ENCODE measurements at regions of chr17 and their contacts with region 1.

Region 1: GRCh38 chr17:45148183-45149036 is at the start of gene HEXIM1:
- DNase-seq: peak; percentile 97
- H3K4me3 ChIP-seq: peak within 1 kb of the TSS; percentile 98
- CTCF ChIP-seq: no peak

Region 2: DNA sequence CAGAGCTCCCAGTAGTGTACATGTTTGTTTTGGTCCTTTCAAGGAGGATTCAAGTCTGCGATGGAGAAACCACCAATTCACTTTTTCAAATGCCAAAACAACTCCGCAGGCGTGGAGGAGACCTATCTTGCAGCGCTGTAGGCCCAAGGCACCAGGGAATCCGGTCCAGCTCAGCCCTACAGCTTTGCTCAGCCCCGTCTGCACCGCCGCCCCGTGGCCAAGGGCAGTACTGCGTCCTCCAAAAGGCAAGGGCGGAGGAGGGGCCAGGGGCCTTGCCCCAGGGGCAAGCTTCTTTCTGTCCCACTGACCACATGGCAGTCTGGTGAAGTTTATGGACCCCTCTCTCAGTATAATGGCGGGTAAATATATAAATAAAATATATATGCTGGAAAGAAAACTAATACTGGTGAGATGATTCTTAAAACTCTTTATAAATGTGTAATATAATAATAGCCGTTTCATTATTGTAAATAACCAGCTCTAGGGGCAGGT is 1302.1 kb before region 1 on chr17:
- CTCF ChIA-PET with region 1: no interaction called
- POLR2A ChIA-PET with region 1: no interaction called
- DNase-seq: peak; percentile 3
- H3K4me3 ChIP-seq: no peak overlapping the region
- CTCF ChIP-seq: peak; percentile 100

Region 3: GRCh38 chr17:45123930-45124796 is 24.2 kb before region 1 on chr17:
- CTCF ChIA-PET with region 1: interaction called, 7 read pairs
- POLR2A ChIA-PET with region 1: interaction called, 11 read pairs
- DNase-seq: no peak
- H3K4me3 ChIP-seq: no peak overlapping the region
- CTCF ChIP-seq: no peak

Region 4: GRCh38 chr17:45161019-45161825 is 12.8 kb after region 1 on chr17:
- CTCF ChIA-PET with region 1: interaction called, 116 read pairs
- POLR2A ChIA-PET with region 1: interaction called, 308 read pairs
- DNase-seq: peak; percentile 100
- H3K4me3 ChIP-seq: peak overlapping the region; percentile 92
- CTCF ChIP-seq: no peak

Region 5: DNA sequence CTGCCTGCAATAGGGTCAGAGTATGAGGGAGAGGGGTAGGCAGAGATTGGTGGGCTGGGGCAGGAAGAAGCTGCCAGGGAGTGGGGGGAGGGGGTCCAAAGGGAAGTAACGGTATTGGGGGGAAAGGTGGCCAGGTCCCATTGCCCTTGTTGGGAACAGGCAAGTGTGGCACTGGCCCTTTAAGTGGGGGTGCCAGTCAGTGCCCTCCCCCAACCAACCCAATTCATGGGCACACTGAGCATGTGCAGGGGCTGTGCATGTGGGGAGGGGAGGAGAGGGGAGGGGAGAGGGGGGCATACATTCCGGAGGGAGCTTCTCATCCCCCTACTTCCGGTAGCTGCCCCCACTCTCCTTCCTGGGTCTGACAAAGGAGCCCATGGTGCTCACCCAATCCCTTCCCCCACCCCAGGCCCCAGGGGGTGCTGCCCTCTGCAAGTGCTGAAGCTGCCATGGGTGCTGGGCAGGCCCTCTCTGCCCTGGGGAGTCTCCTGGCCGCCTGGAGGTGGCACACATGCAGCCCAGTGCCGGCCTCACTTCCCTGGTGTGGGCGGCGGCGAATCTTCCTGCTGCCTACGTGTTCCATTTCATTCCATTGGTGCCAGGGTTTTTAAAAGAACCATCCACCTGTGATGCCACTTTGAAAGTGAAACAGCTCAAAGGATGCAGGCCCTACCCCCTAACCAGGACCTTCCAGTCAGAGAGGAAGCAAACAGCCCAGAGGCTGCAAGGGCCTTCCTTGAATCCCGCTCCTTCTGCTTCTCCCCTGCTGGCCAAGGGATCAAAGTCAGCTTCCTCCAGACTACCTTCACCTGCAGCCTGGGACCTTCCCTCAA is 24.3 kb after region 1 on chr17:
- CTCF ChIA-PET with region 1: interaction called, 21 read pairs
- POLR2A ChIA-PET with region 1: interaction called, 66 read pairs
- DNase-seq: no peak
- H3K4me3 ChIP-seq: peak overlapping the region; percentile 30
- CTCF ChIP-seq: no peak

Region 6: DNA sequence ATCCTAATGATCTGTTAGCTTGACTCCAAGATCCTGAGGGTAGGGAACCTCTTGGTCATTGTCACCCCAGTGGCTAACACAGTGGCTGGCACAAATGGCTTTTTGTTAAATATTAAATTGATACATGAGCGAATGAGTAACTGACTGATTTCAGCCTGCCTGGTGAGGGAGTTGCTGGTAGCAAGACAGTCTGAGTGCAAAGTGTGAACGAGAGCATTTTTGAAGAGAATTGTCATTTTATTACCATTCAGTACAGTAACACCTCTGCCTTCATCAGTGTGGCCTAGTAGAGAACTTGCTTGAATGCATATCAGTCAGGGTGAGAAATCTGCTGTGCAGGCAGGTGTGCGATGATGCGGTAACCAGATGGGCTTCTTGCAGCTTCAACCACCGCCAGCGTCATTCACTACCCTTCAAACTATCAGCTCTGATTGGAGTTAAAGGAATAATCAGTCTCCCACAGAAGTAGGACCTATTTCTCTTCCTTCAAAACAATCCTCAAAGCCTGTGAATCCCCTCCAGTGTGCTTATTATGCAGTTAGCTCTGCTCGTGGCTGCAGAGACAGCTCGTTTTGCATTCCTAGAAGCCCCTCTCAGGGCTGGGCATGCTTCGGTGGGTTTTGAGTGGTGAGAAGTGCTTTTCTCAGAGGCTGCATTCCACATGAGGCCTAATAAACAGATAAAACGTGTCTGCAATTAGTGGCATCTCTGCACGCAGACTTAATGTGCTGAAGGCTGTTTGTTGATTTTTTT is 42.3 kb after region 1 on chr17:
- CTCF ChIA-PET with region 1: interaction called, 399 read pairs
- POLR2A ChIA-PET with region 1: interaction called, 11 read pairs
- DNase-seq: no peak
- H3K4me3 ChIP-seq: no peak overlapping the region
- CTCF ChIP-seq: no peak

Region 7: GRCh38 chr17:45197555-45198334 is 49.3 kb after region 1 on chr17:
- CTCF ChIA-PET with region 1: interaction called, 399 read pairs
- POLR2A ChIA-PET with region 1: interaction called, 97 read pairs
- DNase-seq: peak; percentile 10
- H3K4me3 ChIP-seq: peak overlapping the region; percentile 12; the same call in 1 of the 2 replicates
- CTCF ChIP-seq: peak; percentile 99

Region 8: GRCh38 chr17:45228763-45229539 is 80.5 kb after region 1 on chr17:
- CTCF ChIA-PET with region 1: interaction called, 3 read pairs
- POLR2A ChIA-PET with region 1: interaction called, 13 read pairs
- DNase-seq: peak; percentile 54
- H3K4me3 ChIP-seq: no peak overlapping the region
- CTCF ChIP-seq: no peak

Region 9: GRCh38 chr17:46002311-46002972 is 854.0 kb after region 1 on chr17:
- CTCF ChIA-PET with region 1: no interaction called
- POLR2A ChIA-PET with region 1: no interaction called
- DNase-seq: no peak
- H3K4me3 ChIP-seq: no peak overlapping the region
- CTCF ChIP-seq: peak; percentile 69

Measured in AG04449 (cell line).